BJ (cell line): ENCODE measurements at regions of chr15 and their contacts with region 1.

Region 1: DNA sequence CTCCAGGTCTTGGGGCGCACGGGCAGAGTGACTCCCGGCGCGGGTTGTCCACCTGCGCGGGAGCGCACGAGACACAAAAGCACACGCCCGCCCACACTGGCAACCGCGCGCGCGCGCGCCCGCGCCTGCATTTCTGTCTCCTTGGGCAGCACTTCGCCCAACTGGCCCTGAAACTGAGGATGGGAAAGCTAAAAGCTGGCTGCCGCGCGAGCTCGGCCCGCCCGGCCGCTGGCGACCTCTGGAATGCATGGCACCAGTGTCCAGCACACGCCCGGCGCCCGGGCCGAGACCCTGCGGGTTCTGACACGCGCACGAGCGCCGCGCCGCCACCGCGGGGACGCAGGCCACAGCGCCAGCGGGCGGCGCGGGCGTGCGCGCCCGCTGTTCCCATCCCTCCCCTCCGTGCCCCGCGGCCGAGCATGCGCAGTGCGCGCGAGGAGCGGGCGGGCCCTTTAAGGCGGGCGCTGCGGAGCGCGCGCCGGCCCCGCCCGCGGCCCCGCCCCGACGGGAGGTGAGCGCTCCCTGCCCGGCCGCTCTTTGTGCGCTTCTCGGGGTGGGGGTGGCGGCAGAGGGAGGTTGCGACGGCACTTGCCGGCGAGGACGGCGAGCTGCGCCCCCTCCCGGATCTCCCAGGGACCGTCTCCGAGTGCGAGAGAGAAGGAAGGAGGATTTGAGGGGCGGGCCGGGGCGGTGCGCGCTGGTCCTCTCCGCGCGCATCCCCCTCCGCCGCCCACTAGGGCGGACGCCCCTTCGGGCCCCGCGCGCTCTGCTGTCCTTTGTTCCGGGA is 1.0 kb upstream of the MEX3B start:
- DNase-seq: peak; percentile 44
- H3K4me3 ChIP-seq: peak overlapping the region; percentile 87
- H3K27me3 ChIP-seq: peaks cover 13% of the 10 kb centered on the region
- CTCF ChIP-seq: peak; percentile 67

Region 2: DNA sequence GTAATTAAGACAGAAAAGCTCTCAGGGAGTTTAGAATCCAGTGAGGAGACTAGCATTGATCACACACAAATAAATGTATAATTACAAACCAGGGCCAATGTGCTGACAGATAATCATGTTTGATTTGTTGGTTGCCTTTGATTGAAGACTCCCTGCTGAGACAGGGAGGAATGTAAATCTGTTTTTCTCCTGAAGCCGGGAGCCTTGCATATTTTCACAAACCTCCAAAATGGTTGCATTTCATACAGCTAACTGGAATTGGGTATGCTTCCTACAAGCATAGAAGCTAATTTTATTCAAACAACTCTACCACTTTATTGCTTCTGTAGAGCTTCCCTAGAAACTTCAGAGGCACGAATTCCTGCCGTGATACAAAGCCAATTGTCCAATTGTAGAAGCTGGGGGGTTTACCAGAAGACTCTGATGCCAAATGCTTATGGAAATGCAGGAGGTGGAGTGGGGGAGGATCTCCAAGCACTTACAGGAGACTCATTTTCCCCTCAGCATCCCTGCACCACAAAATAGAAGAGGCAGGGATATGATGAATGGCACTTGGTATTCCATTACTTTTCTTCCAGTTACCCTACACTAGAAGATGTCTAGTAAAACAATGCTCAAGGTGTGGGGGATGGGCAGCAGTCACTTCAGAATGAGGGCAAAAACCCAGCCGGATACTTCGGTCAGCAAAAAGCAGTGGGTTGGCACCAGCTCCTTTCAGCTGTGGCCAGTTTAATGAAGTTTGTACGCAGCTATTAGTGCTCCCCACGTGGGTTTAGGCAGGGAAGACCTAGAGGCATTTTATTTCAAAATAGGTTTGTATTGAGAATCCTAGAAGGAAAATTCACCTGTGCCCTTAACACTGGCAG is 10.3 kb after region 1 on chr15:
- CTCF ChIA-PET with region 1: interaction called, 13 read pairs
- POLR2A ChIA-PET with region 1: interaction called, 5 read pairs
- DNase-seq: no peak
- H3K4me3 ChIP-seq: no peak overlapping the region
- H3K27me3 ChIP-seq: peaks cover 20% of the 10 kb centered on the region
- CTCF ChIP-seq: no peak

Region 3: GRCh38 chr15:82239685-82240391 is 193.0 kb after region 1 on chr15:
- CTCF ChIA-PET with region 1: no interaction called
- POLR2A ChIA-PET with region 1: no interaction called
- DNase-seq: no peak
- H3K4me3 ChIP-seq: no peak overlapping the region
- H3K27me3 ChIP-seq: no peaks in the 10 kb centered on the region; the same call in 1 of the 2 replicates
- CTCF ChIP-seq: no peak